Activated T-helper 1 cell treated with anti-CD3 and anti-CD28 coated beads, Interleukin-12 subunit alpha, Interleukin-12 subunit beta, Interleukin-2, Interleukin-4 antibody, amounts not matched to agents 30 ng/mL and 10 ng/mL and 1 ng/mL, durations not matched to agents 14 hours and 24 hours and 36 hours (primary cell): ENCODE measurements at regions of chr2 and their contacts with region 1.

Region 1: GRCh38 chr2:39920307-39920801 is 141.3 kb upstream of the THUMPD2 start:
- DNase-seq: no peak
- H3K4me3 Mint-ChIP-seq: peak overlapping the region; percentile 82
- H3K27ac Mint-ChIP-seq: peak overlapping the region; percentile 79
- H3K4me1 Mint-ChIP-seq: peaks cover 62% of the 10 kb centered on the region
- H3K27me3 Mint-ChIP-seq: no peaks in the 10 kb centered on the region

Region 2: DNA sequence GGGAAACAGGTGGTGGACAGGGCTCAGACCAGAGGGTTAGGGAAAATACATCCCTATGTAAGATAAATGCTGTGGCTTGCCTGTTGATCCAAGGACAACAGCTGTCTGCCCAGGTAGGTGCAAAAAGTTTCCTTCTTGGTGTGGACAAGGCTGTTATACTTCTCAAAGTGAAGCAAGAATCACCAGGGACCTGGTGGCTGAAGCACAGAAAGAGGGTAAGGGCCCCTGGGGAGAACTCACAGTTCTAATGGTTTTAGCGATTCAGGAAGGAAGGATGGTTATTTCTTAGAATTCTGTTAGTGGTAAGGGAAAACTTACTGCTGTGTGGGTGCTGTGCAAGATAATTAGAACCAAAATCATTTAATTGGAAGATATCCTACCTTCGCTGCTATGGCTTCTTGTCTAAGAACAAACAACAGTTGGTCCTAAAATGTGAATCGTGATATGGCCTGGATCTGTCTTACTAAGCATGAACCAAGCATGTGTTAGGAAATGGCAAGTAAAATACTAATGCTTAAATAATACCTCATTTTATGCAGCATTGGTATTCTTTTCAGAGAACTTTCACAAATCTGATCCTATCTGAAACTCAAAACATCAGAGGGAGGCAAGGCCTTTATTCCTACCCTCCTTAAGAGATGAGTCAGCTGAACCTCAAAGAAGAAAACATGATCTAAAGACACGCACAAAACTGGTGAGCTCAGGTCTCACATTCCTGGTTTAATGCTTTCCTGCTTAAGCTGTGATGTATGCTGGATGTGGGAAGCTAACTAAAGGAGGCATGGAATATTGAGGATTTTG is 17.9 kb after region 1 on chr2:
- intact Hi-C with region 1: loop called (anchors 2 kb)
- DNase-seq: no peak
- H3K4me3 Mint-ChIP-seq: peak overlapping the region; percentile 34
- H3K27ac Mint-ChIP-seq: peak overlapping the region; percentile 95
- H3K4me1 Mint-ChIP-seq: peaks cover 34% of the 10 kb centered on the region
- H3K27me3 Mint-ChIP-seq: no peaks in the 10 kb centered on the region

Region 3: GRCh38 chr2:39948016-39948719 is 27.8 kb after region 1 on chr2:
- intact Hi-C with region 1: loop called (anchors 1 kb)
- DNase-seq: no peak
- H3K4me3 Mint-ChIP-seq: no peak overlapping the region
- H3K27ac Mint-ChIP-seq: peak overlapping the region; percentile 81
- H3K4me1 Mint-ChIP-seq: peaks cover 29% of the 10 kb centered on the region
- H3K27me3 Mint-ChIP-seq: no peaks in the 10 kb centered on the region

Region 4: GRCh38 chr2:39975476-39976020 is 55.2 kb after region 1 on chr2:
- intact Hi-C with region 1: no loop called
- DNase-seq: no peak
- H3K4me3 Mint-ChIP-seq: no peak overlapping the region
- H3K27ac Mint-ChIP-seq: no peak overlapping the region
- H3K4me1 Mint-ChIP-seq: no peaks in the 10 kb centered on the region
- H3K27me3 Mint-ChIP-seq: no peaks in the 10 kb centered on the region

Region 5: DNA sequence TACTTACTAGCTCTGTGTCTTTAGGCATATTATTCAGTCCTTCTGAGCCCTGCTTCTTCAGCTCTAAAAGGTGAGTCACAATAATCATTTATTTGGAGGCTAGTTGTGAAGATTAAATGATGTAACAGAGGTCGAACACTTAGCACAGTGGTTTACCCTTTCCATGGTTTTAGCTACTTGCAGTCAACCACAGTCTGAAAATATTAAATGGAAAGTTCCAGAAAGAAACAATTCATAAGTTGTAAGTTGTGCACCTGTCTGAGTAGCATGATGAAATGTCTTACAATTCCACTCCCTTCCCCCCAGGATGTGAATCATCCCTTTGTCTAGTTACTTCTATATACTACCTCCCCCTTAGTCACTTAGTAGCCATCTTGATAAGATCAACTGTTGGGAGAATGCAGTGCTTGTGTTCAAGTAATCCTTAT is 76.3 kb after region 1 on chr2:
- intact Hi-C with region 1: loop called (anchors 5 kb)
- DNase-seq: no peak
- H3K4me3 Mint-ChIP-seq: no peak overlapping the region
- H3K27ac Mint-ChIP-seq: peak overlapping the region; percentile 18
- H3K4me1 Mint-ChIP-seq: peaks cover 17% of the 10 kb centered on the region
- H3K27me3 Mint-ChIP-seq: peaks cover 1% of the 10 kb centered on the region

Region 6: GRCh38 chr2:40043191-40043590 is 122.8 kb after region 1 on chr2:
- intact Hi-C with region 1: no loop called
- DNase-seq: no peak
- H3K4me3 Mint-ChIP-seq: no peak overlapping the region
- H3K27ac Mint-ChIP-seq: no peak overlapping the region
- H3K4me1 Mint-ChIP-seq: no peaks in the 10 kb centered on the region
- H3K27me3 Mint-ChIP-seq: no peaks in the 10 kb centered on the region

Region 7: DNA sequence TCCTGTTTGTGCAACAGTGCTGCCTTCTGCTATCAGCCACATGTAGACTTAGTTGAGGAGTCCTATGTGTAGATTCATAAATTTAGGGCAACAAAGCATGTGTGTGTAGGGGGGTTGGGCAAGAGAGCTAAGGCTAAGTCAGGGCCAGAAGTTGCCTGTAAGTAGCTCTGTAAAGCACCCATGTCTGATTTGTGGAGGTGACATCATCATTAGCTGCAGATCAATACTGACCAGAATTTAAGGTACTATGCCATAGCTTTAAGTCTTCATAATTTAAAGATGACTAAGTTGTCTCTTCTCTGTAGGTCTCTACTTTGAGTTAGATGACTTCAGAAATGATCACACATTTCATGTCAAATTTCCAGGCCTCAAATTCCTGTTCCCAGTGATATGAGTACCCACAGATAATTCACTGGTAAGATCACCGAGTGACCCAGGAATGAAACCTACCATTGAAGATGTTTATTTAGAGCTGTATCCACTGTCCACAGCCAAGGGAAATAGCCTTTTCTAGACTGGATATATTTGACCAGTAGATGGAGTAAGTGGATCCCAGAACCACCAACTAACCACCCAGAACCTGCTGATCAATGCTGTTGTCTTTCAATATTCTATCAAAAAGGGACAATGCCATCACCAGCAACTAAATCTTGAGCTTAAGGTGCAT is 292.6 kb after region 1 on chr2:
- intact Hi-C with region 1: loop called (anchors 5 kb)
- DNase-seq: no peak
- H3K4me3 Mint-ChIP-seq: no peak overlapping the region
- H3K27ac Mint-ChIP-seq: no peak overlapping the region
- H3K4me1 Mint-ChIP-seq: peaks cover 4% of the 10 kb centered on the region
- H3K27me3 Mint-ChIP-seq: no peaks in the 10 kb centered on the region